Sigmoid colon (tissue), 7 donors: ENCODE measurements at regions of chr19 and their contacts with region 1.

Region 1: DNA sequence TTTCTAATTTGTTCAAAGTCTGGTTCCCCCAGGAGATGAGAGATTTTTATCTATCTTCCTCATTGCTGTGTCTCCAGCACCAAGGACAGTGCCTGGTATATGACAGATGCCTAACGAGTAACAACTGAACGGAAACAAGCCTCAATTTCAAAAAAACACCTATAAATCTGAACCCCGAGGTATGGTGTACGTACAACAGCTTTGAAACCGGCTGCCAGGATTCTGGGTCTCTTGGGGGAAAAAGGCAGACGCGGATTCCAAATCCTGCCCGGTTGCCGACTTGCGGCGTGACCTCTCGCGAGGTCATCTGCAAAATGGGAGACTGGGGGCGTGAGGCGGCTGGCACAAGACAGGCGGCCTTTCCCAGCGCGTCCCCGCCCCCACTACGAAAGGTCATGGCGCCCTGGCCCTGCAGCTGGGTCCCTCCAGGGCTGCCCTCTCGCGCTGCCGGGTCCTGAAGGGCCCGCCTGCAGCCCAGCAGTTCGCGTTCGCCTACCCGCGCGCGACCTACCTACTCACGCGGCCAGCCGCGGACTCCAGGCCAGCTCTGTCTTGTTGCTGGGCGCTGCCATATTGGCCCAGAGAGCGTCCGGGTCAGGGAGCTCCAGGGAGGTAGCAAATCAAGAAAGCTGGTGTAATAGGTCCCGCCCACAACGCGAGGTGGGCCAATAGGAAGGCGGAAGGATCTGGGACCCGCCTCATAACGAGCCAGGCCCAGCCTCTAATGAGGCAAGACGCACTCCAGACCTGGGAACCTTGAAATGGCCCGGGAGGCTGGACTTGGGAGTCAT is at the start of gene ECSIT:
- DNase-seq: peak; percentile 99
- H3K4me3 ChIP-seq: peak within 1 kb of the TSS; percentile 67 to 92 (median 82)
- H3K27ac ChIP-seq: peak within 1 kb of the TSS; percentile 83 to 95 (median 92)
- H3K4me1 ChIP-seq: peaks cover 0 to 36% (median 27%) of the 10 kb centered on the region in 4 donors
- H3K27me3 ChIP-seq: no peaks in the 10 kb centered on the region
- CTCF ChIP-seq: no peak
- EP300 ChIP-seq: no peak
- POLR2A ChIP-seq: peak in 1 of 2 donors; percentile 17
- total RNA-seq, gene ECSIT: 74.5 to 93.5 (median 82.4) TPM

Region 2: GRCh38 chr19:11505032-11505503 is 23.7 kb before region 1 on chr19:
- intact Hi-C with region 1: loop called (anchors 2 kb)
- DNase-seq: peak; percentile 99
- H3K4me3 ChIP-seq: peak overlapping the region; percentile 82 to 98 (median 90)
- H3K27ac ChIP-seq: peak overlapping the region; percentile 92 to 98 (median 98)
- H3K4me1 ChIP-seq: peaks cover 0 to 20% (median 11%) of the 10 kb centered on the region in 4 donors
- H3K27me3 ChIP-seq: no peaks in the 10 kb centered on the region
- CTCF ChIP-seq: no peak
- EP300 ChIP-seq: no peak
- POLR2A ChIP-seq: peak in 1 of 2 donors; percentile 11